RWPE1 (cell line): ENCODE measurements at regions of chr2 and their contacts with region 1.

Region 1: GRCh38 chr2:37287966-37288365 is 36.7 kb downstream of the PRKD3 start:
- DNase-seq: peak; percentile 7
- H3K27ac ChIP-seq: no peak overlapping the region
- CTCF ChIP-seq: no peak

Region 2: DNA sequence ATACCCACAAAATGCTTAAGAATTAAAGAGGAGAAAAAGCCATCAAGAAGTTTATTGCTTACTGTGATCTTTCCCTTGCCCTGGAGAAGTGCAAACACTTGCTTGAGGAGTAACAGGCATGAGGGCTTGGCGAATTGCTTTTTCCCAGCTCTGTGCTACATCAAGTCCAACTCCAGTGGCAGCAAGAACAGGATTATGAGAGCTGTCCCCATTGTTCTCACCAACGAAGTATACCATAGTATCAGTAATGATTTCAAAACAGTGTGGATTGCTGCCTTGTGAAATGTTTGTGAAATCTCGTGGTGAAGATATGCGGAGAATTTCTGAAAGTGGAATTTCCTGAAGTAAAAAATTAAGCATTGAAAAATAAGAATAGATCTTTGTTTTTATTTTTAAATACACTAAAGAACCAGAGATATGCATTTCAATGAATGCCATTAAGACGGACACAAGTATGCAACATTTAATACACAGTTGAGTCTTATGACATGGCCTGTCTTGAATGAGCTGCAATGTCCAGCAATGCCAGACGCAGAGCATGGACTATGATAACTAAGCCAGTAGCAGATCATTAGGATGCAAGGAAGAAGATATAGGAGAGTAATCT is 13.5 kb before region 1 on chr2:
- CTCF ChIA-PET with region 1: no interaction called
- POLR2A ChIA-PET with region 1: no interaction called
- DNase-seq: no peak
- H3K27ac ChIP-seq: no peak overlapping the region
- CTCF ChIP-seq: no peak

Region 3: GRCh38 chr2:37506407-37507050 is 218.6 kb after region 1 on chr2:
- CTCF ChIA-PET with region 1: no interaction called
- POLR2A ChIA-PET with region 1: no interaction called
- DNase-seq: no peak
- H3K27ac ChIP-seq: no peak overlapping the region
- CTCF ChIP-seq: no peak

Region 4: DNA sequence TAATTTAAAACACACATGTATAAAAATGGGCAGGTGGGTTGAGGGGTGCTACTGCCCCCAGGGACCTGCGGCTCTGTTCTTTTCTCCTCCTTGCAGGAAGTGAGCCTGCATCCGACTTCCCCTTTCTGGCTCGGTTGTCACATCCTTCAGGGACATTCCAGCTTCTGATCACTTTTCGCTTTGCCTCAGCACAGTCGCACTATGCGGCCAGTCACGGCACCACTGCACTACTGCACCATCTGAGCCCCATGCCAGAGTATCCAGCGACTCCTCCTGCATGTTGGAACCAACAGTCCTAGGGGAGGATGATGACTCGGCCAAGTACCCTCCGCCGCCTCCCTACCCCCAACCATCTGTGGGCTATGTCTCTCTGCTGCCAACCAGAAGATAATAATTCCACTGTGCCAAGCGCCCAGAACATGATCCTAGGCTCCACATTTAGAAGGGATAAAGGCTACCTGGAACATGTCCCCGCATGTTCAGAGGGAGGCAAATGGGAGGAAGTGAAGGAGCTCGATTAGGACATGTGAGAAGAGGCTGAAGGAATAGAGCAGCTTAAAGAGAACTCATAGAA is 365.9 kb after region 1 on chr2:
- CTCF ChIA-PET with region 1: no interaction called
- POLR2A ChIA-PET with region 1: interaction called, 14 read pairs
- DNase-seq: peak; percentile 37
- H3K27ac ChIP-seq: peak overlapping the region; percentile 81
- CTCF ChIP-seq: no peak